Activated CD8-positive, alpha-beta T cell treated with anti-CD3 and anti-CD28 coated beads, Interleukin-2, amount 10 ng/mL, durations not matched to agents 7 days and 5 days (primary cell): ENCODE measurements at regions of chr5 and their contacts with region 1.

Region 1: GRCh38 chr5:75236322-75237316 is at the start of gene ANKRD31:
- DNase-seq: peak; percentile 89
- ATAC-seq: peak; percentile 98
- H3K4me3 Mint-ChIP-seq: peak within 1 kb of the TSS; percentile 85
- H3K27ac Mint-ChIP-seq: peak within 1 kb of the TSS; percentile 89
- H3K4me1 Mint-ChIP-seq: peaks cover 18% of the 10 kb centered on the region
- H3K27me3 Mint-ChIP-seq: no peaks in the 10 kb centered on the region
- total RNA-seq, gene ANKRD31: 0.23 to 0.26 TPM

Region 2: DNA sequence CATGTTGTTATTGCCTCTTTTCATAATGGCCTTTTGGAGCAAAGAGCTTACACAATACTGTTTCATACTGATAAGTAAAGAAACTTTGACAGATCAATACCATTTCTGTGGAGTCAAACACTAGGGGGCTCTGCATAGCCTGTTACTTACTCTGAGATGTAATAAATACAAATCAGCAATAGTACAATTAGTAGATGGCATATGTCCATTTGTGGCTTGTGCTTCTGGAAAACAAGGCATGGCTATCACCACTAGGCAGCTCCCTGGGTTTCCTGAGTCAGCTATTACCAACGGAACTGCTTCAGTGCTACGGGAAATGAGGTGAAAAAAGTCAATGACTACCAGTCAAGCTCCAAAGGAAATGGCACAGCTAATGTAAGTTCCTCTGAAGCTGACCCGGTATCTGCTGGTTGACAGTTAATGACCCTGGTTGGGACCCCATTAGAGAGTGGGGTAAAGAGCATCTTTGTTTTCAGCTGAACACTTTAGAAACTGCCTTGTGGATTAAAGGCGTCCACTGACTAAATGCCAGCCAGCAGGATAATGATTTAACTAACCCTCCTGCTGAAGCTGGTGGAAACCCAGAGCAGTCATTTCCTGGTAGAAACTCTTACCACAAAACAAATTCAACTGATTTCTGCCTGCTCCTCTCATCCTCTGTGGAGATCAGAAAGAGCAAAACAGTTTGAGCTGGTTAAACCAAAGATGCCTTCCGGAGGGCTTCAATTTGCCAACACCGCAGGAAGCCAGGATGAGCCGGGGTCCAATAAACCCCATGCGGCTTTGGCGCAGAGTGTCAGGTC is 301.5 kb before region 1 on chr5:
- CTCF ChIA-PET with region 1: interaction called, 21 read pairs
- POLR2A ChIA-PET with region 1: no interaction called
- DNase-seq: peak; percentile 49
- ATAC-seq: peak; percentile 91
- H3K4me3 Mint-ChIP-seq: peak overlapping the region; percentile 63
- H3K27ac Mint-ChIP-seq: peak overlapping the region; percentile 89
- H3K4me1 Mint-ChIP-seq: peaks cover 41% of the 10 kb centered on the region
- H3K27me3 Mint-ChIP-seq: peaks cover 7% of the 10 kb centered on the region

Region 3: GRCh38 chr5:75059912-75060545 is 176.6 kb before region 1 on chr5:
- CTCF ChIA-PET with region 1: interaction called, 74 read pairs
- POLR2A ChIA-PET with region 1: interaction called, 26 read pairs
- DNase-seq: peak; percentile 72
- ATAC-seq: peak; percentile 86
- H3K4me3 Mint-ChIP-seq: peak overlapping the region; percentile 24
- H3K27ac Mint-ChIP-seq: peak overlapping the region; percentile 89
- H3K4me1 Mint-ChIP-seq: peaks cover 69% of the 10 kb centered on the region
- H3K27me3 Mint-ChIP-seq: no peaks in the 10 kb centered on the region

Region 4: GRCh38 chr5:75203605-75204004 is 33.0 kb before region 1 on chr5:
- CTCF ChIA-PET with region 1: no interaction called
- POLR2A ChIA-PET with region 1: no interaction called
- DNase-seq: no peak
- ATAC-seq: no peak
- H3K4me3 Mint-ChIP-seq: no peak overlapping the region
- H3K27ac Mint-ChIP-seq: no peak overlapping the region
- H3K4me1 Mint-ChIP-seq: no peaks in the 10 kb centered on the region
- H3K27me3 Mint-ChIP-seq: no peaks in the 10 kb centered on the region

Region 5: DNA sequence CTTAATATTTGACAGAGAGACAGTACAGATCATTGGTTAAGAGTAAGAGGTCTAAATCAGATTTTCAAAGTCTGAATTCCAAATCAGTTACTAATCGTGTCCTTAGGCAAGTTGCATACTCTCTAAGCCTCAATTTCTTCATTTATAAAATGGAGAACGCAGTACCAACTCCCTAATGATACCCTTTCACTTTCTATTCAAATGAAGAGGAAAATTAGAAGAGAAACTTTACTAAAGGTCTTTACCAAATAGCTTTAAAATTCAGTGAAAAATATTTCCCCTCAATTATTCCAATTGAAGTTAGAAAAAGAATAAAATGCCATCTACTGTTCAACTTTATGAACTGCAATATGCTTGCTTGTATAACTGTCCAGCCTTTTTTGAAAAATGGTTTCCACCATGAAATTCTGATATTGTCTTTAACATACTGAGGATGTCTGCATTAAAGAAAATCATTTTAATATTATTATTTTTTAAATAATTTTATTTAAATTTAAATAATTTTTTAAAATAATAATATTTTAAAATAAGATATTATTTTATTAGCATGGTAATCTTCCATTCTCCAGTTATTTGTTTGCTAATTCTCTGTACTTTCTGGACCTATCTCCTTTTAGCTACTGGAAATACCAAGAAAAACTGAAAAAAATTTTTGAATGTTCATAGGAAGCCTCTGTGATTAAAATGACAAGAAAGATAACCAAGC is 444.7 kb after region 1 on chr5:
- CTCF ChIA-PET with region 1: interaction called, 29 read pairs
- POLR2A ChIA-PET with region 1: no interaction called
- DNase-seq: no peak
- ATAC-seq: no peak
- H3K4me3 Mint-ChIP-seq: no peak overlapping the region
- H3K27ac Mint-ChIP-seq: no peak overlapping the region
- H3K4me1 Mint-ChIP-seq: peaks cover 9% of the 10 kb centered on the region
- H3K27me3 Mint-ChIP-seq: no peaks in the 10 kb centered on the region